Testis (tissue), 5 donors: ENCODE measurements at regions of chr2 and their contacts with region 1.

Region 1: DNA sequence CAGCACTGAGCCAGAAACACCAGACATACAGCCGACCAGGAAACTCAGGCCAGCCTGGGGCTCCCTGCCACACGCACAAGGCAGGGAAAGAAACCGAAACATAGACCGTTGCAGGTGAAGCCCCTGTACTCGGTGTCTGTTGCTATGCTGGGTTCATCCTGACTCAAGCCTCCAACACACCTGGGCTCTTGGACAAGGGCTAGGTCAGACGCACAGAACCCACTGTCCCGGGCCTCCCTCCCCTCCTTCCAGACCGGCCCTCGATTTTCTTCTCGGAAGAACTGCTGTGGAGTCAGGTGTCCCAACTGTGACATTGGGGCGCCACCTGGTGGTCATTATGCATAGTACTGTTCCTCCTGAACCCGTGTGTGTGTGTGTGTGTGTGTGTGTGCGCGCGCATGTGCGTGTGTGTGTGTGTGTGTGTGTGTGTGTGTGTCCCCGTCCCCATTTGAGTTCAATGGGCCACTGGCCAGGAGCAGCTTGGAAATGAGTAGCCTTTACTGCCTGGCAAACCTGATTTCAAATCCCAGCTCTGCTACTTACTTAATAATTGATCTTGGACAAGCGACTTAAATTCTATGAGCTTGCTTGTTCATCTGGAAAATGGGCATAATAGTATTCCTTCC is 55.4 kb upstream of the GLI2 start:
- DNase-seq: peak; percentile 94
- H3K4me3 ChIP-seq: no peak overlapping the region
- H3K27ac ChIP-seq: no peak overlapping the region
- H3K4me1 ChIP-seq: peaks cover 4% of the 10 kb centered on the region
- H3K27me3 ChIP-seq: no peaks in the 10 kb centered on the region
- CTCF ChIP-seq: peak; percentile 57 to 85 (median 84)
- POLR2A ChIP-seq: no peak

Region 2: DNA sequence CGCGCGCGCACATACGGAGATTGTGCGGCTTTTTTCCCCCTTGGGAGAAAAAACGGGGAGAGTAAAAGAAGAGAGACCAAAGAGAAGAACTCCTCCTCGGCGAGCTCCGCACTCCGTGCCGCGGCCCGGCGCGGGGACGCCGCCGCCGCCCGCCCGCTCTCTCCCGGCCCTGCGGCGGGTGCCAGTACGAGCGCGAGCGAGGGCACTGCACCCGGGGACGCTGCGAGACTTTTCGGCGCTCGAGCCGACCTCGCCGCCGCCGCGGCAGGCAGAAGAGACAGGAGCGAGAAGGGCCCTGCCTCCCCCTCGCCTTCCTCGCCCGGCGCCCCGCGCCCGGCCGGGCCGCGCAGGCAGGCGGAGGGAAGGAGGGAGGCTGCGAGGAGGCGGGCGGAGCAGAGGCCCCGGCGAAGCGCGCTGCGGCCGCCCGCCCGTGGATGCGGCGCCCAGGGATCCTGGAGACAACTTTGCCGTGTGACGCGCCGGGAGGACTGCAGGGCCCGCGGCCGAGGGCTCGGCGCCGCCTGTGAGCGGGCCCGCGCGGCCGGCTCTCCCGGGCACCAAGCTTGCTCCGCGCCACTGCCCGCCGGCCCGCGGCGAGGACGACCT is 335.2 kb before region 1 on chr2:
- intact Hi-C with region 1: loop called (anchors 5 kb)
- DNase-seq: no peak
- H3K4me3 ChIP-seq: peak overlapping the region; percentile 55 to 66
- H3K27ac ChIP-seq: peak overlapping the region; percentile 83 to 84
- H3K4me1 ChIP-seq: peaks cover 13% of the 10 kb centered on the region
- H3K27me3 ChIP-seq: no peaks in the 10 kb centered on the region
- CTCF ChIP-seq: no peak
- POLR2A ChIP-seq: no peak

Region 3: DNA sequence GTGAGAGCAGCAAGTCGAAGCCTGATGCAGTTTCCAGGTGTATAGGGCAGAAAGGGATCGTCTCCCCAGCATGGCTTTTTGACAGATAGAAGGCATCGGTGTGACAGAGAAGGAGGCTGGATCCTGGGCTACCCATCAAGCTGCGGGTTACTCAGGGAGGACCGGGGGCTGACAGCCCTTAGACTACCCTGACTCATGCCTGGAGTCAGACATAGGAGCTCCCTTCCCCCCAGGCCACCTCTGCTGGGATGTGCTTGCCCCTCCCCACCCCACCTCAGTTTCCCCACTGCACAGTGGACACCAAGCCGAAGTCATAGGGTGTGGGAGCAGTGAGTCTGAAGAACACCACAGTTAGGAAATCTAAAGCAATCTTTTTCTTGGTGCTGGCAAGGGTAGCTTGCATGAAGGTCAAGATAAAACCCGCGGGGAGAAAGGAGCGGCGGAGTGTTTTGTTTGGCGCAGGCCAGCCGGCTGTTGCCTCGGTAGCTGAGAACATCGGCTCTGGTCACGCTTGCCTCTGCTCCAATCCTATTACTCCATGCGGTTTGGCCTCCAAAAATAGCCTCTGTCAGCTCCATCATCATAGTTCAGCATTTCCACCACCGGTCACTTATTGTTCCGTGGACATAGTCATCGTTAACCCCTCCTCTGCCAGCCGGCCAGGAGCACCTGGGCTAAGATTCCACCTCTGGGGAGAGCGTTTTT is 113.8 kb before region 1 on chr2:
- intact Hi-C with region 1: no loop called
- DNase-seq: peak; percentile 75
- H3K4me3 ChIP-seq: no peak overlapping the region
- H3K27ac ChIP-seq: no peak overlapping the region
- H3K4me1 ChIP-seq: peaks cover 17% of the 10 kb centered on the region
- H3K27me3 ChIP-seq: no peaks in the 10 kb centered on the region
- CTCF ChIP-seq: no peak
- POLR2A ChIP-seq: no peak

Region 4: GRCh38 chr2:120613742-120614571 is 66.3 kb before region 1 on chr2:
- intact Hi-C with region 1: no loop called
- DNase-seq: no peak
- H3K4me3 ChIP-seq: peak overlapping the region in 1 of 2 donors; percentile 5
- H3K27ac ChIP-seq: no peak overlapping the region
- H3K4me1 ChIP-seq: no peaks in the 10 kb centered on the region
- H3K27me3 ChIP-seq: no peaks in the 10 kb centered on the region
- CTCF ChIP-seq: no peak
- POLR2A ChIP-seq: no peak

Region 5: GRCh38 chr2:120722568-120723421 is 42.5 kb after region 1 on chr2:
- intact Hi-C with region 1: no loop called
- DNase-seq: no peak
- H3K4me3 ChIP-seq: no peak overlapping the region
- H3K27ac ChIP-seq: no peak overlapping the region
- H3K4me1 ChIP-seq: no peaks in the 10 kb centered on the region
- H3K27me3 ChIP-seq: no peaks in the 10 kb centered on the region
- CTCF ChIP-seq: no peak
- POLR2A ChIP-seq: no peak

Region 6: DNA sequence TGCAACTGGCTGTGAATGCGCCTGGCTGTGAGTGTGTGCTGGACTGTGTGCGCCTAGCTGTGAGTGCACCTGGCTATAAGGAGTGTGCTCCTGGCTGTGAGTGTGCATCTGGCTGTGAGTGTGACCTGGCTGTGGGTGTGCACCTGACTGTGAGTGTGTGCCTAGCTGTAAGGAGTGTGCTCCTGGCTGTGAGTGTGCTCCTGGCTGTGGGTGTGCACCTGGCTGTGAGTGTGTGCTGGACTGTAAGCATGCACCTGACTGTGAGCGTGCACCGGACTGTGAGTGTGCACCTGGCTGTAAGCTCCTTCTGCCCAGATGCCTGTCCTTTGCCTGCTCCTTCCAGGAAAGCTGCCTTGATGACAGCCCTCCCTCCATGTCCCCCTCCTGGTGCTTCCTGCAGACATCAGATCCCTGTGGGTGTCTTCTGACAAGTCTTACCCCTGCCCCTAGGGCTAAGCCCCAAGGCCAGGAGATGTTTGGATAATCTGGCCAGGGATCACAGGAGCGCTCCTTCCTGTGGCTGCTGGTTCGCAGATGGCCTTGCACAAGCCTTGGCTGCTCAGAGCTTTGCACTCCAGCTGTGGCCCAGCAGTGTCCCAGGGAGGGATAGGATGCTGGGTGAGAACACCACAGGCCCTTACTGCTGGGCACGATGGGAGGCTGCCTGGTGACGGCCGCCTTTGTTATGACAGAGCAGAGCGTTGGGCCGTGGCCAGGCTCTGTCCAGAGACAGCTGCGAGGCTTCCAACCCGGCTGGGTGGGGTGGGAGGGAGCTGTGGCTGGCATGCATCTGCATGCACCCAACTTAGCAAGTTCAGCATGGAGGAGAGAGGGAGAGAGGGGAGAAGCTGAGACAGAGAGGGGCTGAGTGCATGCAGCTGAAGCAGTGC is 145.4 kb after region 1 on chr2:
- intact Hi-C with region 1: no loop called
- DNase-seq: peak; percentile 58
- H3K4me3 ChIP-seq: no peak overlapping the region
- H3K27ac ChIP-seq: no peak overlapping the region
- H3K4me1 ChIP-seq: peaks cover 39% of the 10 kb centered on the region
- H3K27me3 ChIP-seq: no peaks in the 10 kb centered on the region
- CTCF ChIP-seq: no peak
- POLR2A ChIP-seq: no peak